Astrocyte of the cerebellum (primary cell): ENCODE measurements at regions of chr2 and their contacts with region 1.

Region 1: DNA sequence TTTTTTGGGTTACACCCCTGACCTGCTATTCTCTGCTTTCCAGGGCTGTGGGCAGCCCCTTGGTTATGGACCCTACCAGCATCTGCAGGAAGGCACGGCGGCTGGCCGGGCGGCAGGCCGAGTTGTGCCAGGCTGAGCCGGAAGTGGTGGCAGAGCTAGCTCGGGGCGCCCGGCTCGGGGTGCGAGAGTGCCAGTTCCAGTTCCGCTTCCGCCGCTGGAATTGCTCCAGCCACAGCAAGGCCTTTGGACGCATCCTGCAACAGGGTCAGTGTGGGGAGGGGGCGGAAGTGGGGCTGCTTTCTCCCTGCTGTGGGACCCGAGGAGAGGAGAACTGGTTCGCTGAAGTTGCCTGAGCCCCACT is 9.7 kb upstream of the WNT10A start:
- DNase-seq: no peak
- H3K4me3 ChIP-seq: no peak overlapping the region
- CTCF ChIP-seq: no peak

Region 2: DNA sequence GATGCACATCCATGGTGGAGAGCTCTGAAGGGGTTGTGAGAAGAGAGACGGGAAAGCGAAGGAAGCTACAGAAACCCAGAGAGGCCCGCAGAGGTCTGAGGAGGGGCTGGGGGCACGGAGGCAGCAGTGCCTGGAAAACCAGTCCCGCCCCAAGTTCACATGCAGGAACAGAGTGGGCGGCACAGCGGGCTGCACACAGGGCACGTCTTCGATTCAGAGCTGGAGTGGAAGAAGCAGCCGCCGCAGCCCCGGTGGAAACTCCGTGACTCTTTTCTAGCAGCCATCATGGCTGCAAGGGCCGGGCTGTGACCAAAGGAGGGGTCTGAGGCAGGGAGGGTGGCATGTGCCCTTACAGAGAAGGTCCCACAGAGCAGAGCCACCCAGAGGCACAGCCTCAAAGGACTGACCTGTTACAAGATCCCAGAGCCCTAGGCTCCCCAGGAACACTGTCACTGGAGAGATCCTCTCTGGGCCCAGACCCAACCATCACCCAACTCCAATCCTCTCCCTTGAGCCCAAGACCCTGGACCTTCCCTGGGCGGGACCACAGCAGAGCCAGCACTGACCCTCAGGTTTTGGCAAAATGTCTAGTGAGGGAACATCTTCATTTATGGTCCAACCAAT is 50.1 kb before region 1 on chr2:
- in situ Hi-C with region 1: loop called (anchors 5 kb)
- DNase-seq: no peak
- H3K4me3 ChIP-seq: no peak overlapping the region
- CTCF ChIP-seq: no peak

Region 3: GRCh38 chr2:218839430-218839829 is 31.5 kb before region 1 on chr2:
- in situ Hi-C with region 1: no loop called
- DNase-seq: no peak
- H3K4me3 ChIP-seq: no peak overlapping the region
- CTCF ChIP-seq: no peak

Region 4: DNA sequence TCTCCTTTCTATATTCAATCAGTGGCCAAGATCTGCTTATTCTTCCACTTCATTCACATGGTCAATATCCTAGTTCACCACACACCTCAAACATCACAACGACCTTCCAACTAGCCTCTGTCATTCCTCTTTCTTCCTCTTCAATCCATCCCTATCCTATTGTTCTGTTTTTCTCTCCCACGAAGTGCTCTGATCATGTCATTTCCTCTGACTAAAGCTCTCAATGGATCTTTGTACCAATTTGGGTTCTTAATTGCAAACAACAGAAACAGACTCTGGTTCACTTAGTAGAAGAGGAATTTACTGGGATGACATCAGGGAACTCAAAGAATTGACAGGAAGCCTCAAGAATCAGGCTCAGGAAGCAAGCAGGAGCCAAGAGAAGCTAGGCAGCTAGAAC is 33.2 kb after region 1 on chr2:
- in situ Hi-C with region 1: no loop called
- DNase-seq: no peak
- H3K4me3 ChIP-seq: no peak overlapping the region
- CTCF ChIP-seq: no peak

Region 5: DNA sequence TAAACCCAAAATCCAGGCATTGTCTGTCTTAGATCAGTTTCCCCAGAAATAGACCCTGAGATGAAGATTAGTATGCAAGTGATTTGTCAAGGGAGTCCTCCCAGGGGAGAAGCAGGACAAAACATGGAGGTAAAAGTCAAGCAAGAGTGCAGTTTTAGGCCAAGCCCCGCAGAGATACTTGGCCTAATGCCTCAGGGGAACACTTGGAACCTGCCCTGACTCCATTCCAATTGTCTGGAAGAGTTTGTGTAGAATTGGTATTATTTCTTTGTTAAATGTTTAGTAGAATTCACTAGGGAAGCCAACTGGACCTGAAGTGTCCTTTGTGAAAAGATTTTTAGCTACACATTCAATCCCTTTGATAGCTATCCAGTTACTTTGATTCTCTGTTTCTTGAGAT is 44.1 kb after region 1 on chr2:
- in situ Hi-C with region 1: no loop called
- DNase-seq: no peak
- H3K4me3 ChIP-seq: no peak overlapping the region
- CTCF ChIP-seq: no peak

Region 6: DNA sequence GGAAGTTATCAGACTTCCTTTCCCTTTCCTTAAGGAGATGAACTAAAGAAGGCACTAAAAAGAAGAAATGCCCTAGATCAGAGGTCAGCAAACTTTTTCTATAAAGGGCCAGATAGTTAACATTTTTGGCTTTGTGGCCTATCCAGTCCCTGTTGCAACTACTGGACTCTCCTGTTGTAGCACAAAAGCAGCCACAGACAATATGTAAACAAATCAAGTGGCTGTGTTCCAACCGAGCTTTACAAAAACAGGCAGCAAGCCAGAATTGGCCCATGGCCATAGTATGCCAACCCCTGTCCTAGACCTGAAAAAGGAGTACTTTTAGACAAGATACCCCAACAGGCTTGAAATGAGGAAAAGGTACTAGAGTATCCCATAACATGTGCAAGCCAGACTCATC is 278.7 kb after region 1 on chr2:
- in situ Hi-C with region 1: no loop called
- DNase-seq: no peak
- H3K4me3 ChIP-seq: no peak overlapping the region
- CTCF ChIP-seq: no peak